ENCODE measurements at regions of chr20 and their contacts with region 1.

Region 1: GRCh38 chr20:51595058-51595532 is 52.6 kb upstream of the NFATC2 start:
- DNase-seq: peak; percentile 97
- H3K4me3 ChIP-seq: no peak overlapping the region
- H3K27ac ChIP-seq: peak overlapping the region; percentile 39 to 62 (median 56)
- H3K4me1 ChIP-seq: peaks cover 8 to 24% (median 22%) of the 10 kb centered on the region in 4 donors
- H3K27me3 ChIP-seq: no peaks in the 10 kb centered on the region
- CTCF ChIP-seq: peak; percentile 87 to 94 (median 92)
- EP300 ChIP-seq: no peak
- POLR2A ChIP-seq: no peak

Region 2: DNA sequence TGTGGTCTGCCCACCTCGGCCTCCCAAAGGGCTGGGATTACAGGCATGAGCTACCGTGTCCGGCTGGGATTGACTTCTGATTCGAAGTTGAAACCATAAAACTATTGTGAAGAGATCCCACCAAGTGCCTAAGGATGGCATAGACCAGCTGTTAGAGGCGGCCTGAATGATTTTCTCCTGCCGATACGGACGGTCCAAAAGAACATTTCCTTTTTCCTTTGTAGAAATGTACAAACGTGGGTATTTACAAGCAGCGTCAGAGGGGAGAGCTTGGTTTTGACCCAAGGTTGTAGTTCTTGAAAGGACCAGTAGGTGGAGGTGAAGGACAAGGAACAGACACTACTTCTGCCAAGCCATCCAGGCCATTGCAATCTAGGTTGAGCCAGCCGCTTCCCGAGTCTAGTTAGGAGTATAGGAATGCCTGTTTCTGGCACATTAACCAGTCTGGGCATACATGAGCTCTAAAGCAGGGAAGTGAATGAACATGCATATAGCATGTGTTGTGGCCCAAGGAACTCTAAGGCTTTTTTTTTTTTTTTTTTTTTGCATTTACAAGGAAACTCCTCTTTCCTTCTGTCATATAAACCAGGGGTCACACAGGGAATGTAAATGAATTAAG is 607.4 kb before region 1 on chr20:
- intact Hi-C with region 1: loop called (anchors 10 kb)
- DNase-seq: no peak
- H3K4me3 ChIP-seq: peak overlapping the region in 1 of 4 donors; percentile 18
- H3K27ac ChIP-seq: no peak overlapping the region
- H3K4me1 ChIP-seq: peaks cover 0 to 7% (median 3%) of the 10 kb centered on the region in 4 donors
- H3K27me3 ChIP-seq: peaks cover 0 to 62% (median 5%) of the 10 kb centered on the region in 4 donors
- CTCF ChIP-seq: peak; percentile 85 to 92 (median 90)
- EP300 ChIP-seq: no peak
- POLR2A ChIP-seq: no peak

Region 3: GRCh38 chr20:51372176-51372803 is 222.8 kb before region 1 on chr20:
- intact Hi-C with region 1: loop called (anchors 2 kb)
- DNase-seq: no peak
- H3K4me3 ChIP-seq: no peak overlapping the region
- H3K27ac ChIP-seq: no peak overlapping the region
- H3K4me1 ChIP-seq: peaks cover 3 to 15% (median 8%) of the 10 kb centered on the region in 4 donors
- H3K27me3 ChIP-seq: no peaks in the 10 kb centered on the region
- CTCF ChIP-seq: peak; percentile 71 to 84 (median 74)
- EP300 ChIP-seq: no peak
- POLR2A ChIP-seq: no peak

Region 4: GRCh38 chr20:51456511-51457509 is 138.3 kb before region 1 on chr20:
- intact Hi-C with region 1: loop called (anchors 10 kb)
- DNase-seq: peak; percentile 98
- H3K4me3 ChIP-seq: peak overlapping the region; percentile 17 to 36 (median 32)
- H3K27ac ChIP-seq: peak overlapping the region; percentile 75 to 85 (median 80)
- H3K4me1 ChIP-seq: peaks cover 17 to 30% (median 23%) of the 10 kb centered on the region in 4 donors
- H3K27me3 ChIP-seq: no peaks in the 10 kb centered on the region
- CTCF ChIP-seq: no peak
- EP300 ChIP-seq: no peak
- POLR2A ChIP-seq: no peak

Region 5: DNA sequence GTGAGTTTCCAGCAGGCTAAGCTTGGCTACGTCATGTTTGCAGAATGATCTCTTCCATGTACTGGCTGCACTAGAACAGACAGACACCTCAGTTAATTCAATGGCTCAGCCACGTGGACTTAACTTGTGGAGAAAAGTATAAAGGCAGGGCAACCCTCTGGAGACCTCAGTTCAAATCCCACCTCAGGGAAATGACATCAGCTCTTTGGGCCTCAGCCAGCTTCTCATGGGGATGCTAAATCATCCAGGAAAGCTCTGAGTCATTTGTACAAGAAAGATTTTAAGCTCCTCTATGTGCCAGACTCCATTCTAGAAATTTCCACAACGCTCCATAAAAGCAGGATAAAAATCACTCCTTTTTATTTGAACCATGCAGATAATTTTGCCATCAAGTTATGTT is 335.7 kb after region 1 on chr20:
- intact Hi-C with region 1: no loop called
- DNase-seq: no peak
- H3K4me3 ChIP-seq: no peak overlapping the region
- H3K27ac ChIP-seq: no peak overlapping the region
- H3K4me1 ChIP-seq: no peaks in the 10 kb centered on the region
- H3K27me3 ChIP-seq: peaks cover 0 to 30% (median 0%) of the 10 kb centered on the region in 4 donors
- CTCF ChIP-seq: no peak
- EP300 ChIP-seq: no peak
- POLR2A ChIP-seq: no peak